H1 (cell line): ENCODE measurements at regions of chr2 and their contacts with region 1.

Region 1: GRCh38 chr2:44244129-44244871 is 31.0 kb upstream of the SLC3A1 start:
- DNase-seq: no peak
- H3K4me3 ChIP-seq: peak overlapping the region in 2 of 4 experiments; percentile 11 to 35; a peak in 1 of 8 replicates
- H3K27ac ChIP-seq: no peak overlapping the region
- H3K4me1 ChIP-seq: peaks cover 2 to 8% (median 2%) of the 10 kb centered on the region in 4 experiments; a peak in 5 of 7 replicates
- H3K27me3 ChIP-seq: no peaks in the 10 kb centered on the region
- CTCF ChIP-seq: peak in 2 of 3 experiments; percentile 33 to 59; a peak in 3 of 4 replicates
- EP300 ChIP-seq: no peak
- POLR2A ChIP-seq: no peak
- RAD21 ChIP-seq: peak; percentile 51 to 63

Region 2: GRCh38 chr2:44267796-44268648 is 23.7 kb after region 1 on chr2:
- CTCF ChIA-PET with region 1: interaction called, 20 read pairs
- POLR2A ChIA-PET with region 1: no interaction called
- DNase-seq: no peak
- H3K4me3 ChIP-seq: no peak overlapping the region
- H3K27ac ChIP-seq: no peak overlapping the region
- H3K4me1 ChIP-seq: peaks cover 0 to 5% (median 0%) of the 10 kb centered on the region in 4 experiments; a peak in 1 of 7 replicates
- H3K27me3 ChIP-seq: no peaks in the 10 kb centered on the region
- CTCF ChIP-seq: no peak
- EP300 ChIP-seq: no peak
- POLR2A ChIP-seq: no peak
- RAD21 ChIP-seq: no peak

Region 3: GRCh38 chr2:44295607-44296359 is 51.5 kb after region 1 on chr2:
- CTCF ChIA-PET with region 1: interaction called, 16 read pairs
- POLR2A ChIA-PET with region 1: interaction called, 3 read pairs
- DNase-seq: no peak
- H3K4me3 ChIP-seq: no peak overlapping the region
- H3K27ac ChIP-seq: no peak overlapping the region
- H3K4me1 ChIP-seq: no peaks in the 10 kb centered on the region
- H3K27me3 ChIP-seq: no peaks in the 10 kb centered on the region
- CTCF ChIP-seq: peak; percentile 51 to 59 (median 56)
- EP300 ChIP-seq: no peak
- POLR2A ChIP-seq: no peak
- RAD21 ChIP-seq: peak; percentile 58 to 63

Region 4: DNA sequence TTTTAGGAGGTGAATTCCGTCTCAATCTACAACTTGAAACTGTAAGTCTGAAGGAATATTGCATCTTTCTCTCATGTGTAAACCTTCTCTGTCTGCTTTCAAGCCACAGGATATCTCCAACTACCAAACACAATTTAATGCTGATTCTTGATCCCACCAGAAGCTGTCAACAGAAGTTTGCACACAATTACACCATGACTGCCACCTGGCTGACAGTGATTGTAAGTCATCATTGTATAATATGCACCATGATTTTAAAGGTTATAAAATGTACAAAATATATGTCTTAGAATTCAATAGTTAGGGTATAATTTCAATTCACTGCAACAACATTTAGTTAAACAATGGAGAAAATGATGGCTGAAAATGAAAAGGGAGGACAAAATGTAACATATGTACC is 98.6 kb after region 1 on chr2:
- CTCF ChIA-PET with region 1: interaction called, 13 read pairs
- POLR2A ChIA-PET with region 1: no interaction called
- DNase-seq: no peak
- H3K4me3 ChIP-seq: no peak overlapping the region
- H3K27ac ChIP-seq: no peak overlapping the region
- H3K4me1 ChIP-seq: no peaks in the 10 kb centered on the region
- H3K27me3 ChIP-seq: no peaks in the 10 kb centered on the region
- CTCF ChIP-seq: peak in 2 of 3 experiments; percentile 30 to 40; a peak in 3 of 4 replicates
- EP300 ChIP-seq: no peak
- POLR2A ChIP-seq: no peak
- RAD21 ChIP-seq: peak; percentile 64 to 68

Region 5: DNA sequence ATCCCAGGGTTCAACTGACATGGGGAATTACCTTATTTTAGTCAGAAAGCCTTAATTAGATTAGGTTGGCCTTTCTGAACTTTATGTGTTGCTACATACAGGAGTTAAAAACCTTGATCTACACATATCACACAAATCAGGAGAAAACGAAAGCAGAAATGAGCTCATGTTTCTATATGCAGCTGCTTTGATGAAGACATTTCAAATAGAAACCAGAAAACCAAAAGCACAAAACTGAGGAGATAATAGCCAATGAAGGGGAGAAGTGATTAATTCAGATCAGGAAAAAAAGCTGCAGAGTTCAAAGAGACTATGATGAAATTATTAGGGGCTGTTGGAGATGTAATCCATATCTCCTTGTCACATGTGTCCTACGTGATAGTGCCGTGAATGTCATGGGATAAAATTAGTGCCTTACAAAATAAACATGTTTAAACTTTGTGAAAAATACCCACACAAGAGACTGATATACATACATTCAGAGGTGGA is 372.4 kb after region 1 on chr2:
- CTCF ChIA-PET with region 1: no interaction called
- POLR2A ChIA-PET with region 1: no interaction called
- DNase-seq: no peak
- H3K4me3 ChIP-seq: no peak overlapping the region
- H3K27ac ChIP-seq: no peak overlapping the region
- H3K4me1 ChIP-seq: peaks cover 2 to 6% (median 5%) of the 10 kb centered on the region in 4 experiments; a peak in 6 of 7 replicates
- H3K27me3 ChIP-seq: no peaks in the 10 kb centered on the region
- CTCF ChIP-seq: no peak
- EP300 ChIP-seq: no peak
- POLR2A ChIP-seq: no peak
- RAD21 ChIP-seq: no peak